OCI-LY7 (cell line): ENCODE measurements at regions of chr5 and their contacts with region 1.

Region 1: DNA sequence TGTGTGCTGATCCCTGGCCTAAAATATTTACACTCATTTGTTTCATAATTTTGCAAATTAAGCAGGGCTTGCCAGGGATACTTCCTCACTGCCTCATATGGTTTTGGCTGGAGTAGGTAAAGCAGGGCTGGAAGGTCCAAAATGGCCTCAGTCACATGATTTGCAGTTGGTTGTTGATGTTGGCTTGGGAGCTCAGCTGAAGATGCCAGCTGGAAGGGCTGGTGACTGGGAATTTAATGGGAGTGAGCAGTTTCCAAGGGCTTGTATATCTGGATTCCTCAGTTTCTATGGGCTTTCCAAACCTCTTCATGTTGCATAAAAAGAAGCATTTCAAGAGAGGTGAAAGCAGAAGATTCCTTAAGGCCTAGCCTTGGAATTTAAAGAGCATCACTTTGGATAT is 729.3 kb downstream of the CDH18 start:
- DNase-seq: no peak
- H3K4me3 ChIP-seq: no peak overlapping the region
- H3K27ac ChIP-seq: no peak overlapping the region
- H3K4me1 ChIP-seq: peaks cover 45% of the 10 kb centered on the region
- CTCF ChIP-seq: no peak

Region 2: DNA sequence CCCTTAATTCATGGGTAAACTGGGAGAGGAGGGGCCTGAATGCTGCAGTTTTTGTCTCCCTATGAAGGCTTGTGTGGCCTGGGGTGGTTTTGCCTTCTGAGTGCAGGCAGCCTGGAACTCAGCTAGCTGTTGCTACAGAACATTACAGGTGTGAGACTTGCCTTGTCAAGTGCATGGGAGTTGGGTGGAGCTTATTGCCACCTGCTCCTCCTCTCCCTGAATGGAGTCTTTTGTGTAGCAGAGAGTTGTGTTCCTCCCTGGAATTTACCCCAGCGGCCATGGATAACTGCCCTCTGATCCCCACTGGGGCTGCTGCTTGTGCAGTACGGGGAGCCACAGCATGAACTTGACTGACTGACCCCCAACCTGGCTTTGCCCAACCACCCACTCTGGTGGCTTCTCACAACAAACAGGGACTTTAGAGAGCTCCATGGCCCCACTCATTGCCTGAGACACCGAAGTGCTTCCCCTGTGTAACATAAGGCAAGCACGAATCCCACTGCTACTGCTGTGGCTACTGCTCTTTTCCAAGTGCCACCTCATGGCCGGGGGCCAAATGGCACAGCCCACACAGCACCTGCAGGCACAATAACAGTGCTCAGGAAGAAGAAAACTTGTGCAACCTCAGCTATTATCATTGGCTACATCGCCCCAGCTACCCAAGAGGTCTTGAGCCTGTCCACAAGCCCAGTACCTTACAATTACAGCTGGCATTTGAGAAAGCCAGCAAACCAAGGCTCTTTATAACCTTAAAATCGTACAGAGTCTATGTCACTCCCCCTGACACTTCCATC is 213.6 kb before region 1 on chr5:
- CTCF ChIA-PET with region 1: no interaction called
- POLR2A ChIA-PET with region 1: no interaction called
- intact Hi-C with region 1: loop called (anchors 10 kb)
- DNase-seq: no peak
- H3K4me3 ChIP-seq: no peak overlapping the region
- H3K27ac ChIP-seq: no peak overlapping the region
- H3K4me1 ChIP-seq: no peaks in the 10 kb centered on the region
- CTCF ChIP-seq: no peak

Region 3: DNA sequence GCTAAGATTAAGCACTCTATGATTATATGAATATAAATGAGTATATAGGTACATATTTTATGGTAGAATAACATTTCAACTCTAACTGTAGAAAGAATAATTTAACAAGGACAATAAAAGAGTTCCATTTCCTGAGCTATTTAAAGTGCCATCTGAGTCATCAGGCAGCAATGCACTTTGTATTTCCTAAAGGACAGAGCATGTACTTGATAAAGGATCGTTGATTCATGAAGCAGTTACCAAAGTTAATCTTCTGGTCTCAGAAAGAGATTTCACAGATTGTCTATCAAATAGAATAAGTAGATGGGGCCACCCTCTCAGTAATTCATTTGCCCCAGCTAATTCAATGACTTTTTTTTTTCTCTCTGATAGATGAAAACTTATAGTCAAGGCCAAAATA is 18.5 kb before region 1 on chr5:
- CTCF ChIA-PET with region 1: no interaction called
- POLR2A ChIA-PET with region 1: interaction called, 103 read pairs
- intact Hi-C with region 1: no loop called
- DNase-seq: no peak
- H3K4me3 ChIP-seq: no peak overlapping the region
- H3K27ac ChIP-seq: no peak overlapping the region
- H3K4me1 ChIP-seq: peaks cover 17% of the 10 kb centered on the region
- CTCF ChIP-seq: no peak

Region 4: DNA sequence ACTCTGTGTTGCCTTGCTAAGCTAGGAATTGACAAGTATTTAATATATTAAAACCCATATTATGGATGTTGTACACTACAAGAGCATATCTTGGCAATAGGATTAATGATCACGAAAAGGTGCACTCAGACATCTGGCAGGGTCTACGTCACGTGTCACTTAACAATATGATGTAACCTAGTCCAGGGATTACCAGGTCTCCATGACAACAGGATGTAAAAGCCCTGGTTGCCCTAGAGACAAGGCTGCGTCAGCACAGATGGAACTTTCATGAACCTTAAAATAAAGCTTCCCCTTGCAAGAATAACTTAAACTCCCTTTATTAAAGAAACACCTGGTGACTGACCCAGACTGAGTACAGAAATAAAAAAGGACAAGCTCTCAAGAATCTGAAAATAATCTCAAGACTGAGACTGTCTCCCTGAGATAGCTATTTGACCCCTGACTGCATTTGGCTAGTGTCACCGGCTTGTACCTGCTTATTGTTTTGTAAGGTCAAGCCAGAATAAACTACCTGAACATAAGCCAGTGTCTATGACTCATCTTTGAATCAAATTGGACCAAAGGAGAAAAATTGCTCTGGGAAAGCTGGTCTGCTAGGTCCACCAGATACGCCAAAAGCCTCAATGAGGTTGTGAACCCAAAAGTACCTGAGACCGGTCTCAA is 11.6 kb after region 1 on chr5:
- CTCF ChIA-PET with region 1: interaction called, 3 read pairs
- POLR2A ChIA-PET with region 1: interaction called, 53 read pairs
- intact Hi-C with region 1: no loop called
- DNase-seq: peak; percentile 99
- H3K4me3 ChIP-seq: peak overlapping the region; percentile 34
- H3K27ac ChIP-seq: peak overlapping the region; percentile 100
- H3K4me1 ChIP-seq: peaks cover 81% of the 10 kb centered on the region
- CTCF ChIP-seq: no peak

Region 5: DNA sequence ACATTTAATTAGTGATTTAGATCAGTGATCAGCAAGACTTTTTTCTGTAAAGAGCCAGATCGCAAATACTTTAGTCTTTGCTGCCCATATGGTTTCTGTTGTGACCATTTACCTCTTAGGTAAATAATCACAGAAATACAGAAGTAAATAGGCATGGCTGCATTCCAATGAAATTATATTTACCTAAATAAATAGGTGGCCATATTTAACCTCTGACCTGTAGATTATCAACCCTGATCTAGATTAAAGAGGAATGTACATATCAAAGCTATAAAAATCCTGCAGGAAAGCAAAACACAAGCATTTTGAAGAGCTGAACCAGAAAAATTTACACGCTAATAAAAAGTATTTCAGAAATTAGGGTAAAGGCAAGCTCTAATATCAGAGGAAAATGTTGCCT is 19.6 kb after region 1 on chr5:
- CTCF ChIA-PET with region 1: no interaction called
- POLR2A ChIA-PET with region 1: interaction called, 45 read pairs
- intact Hi-C with region 1: no loop called
- DNase-seq: no peak
- H3K4me3 ChIP-seq: no peak overlapping the region
- H3K27ac ChIP-seq: no peak overlapping the region
- H3K4me1 ChIP-seq: peaks cover under 1% of the 10 kb centered on the region
- CTCF ChIP-seq: no peak

Region 6: DNA sequence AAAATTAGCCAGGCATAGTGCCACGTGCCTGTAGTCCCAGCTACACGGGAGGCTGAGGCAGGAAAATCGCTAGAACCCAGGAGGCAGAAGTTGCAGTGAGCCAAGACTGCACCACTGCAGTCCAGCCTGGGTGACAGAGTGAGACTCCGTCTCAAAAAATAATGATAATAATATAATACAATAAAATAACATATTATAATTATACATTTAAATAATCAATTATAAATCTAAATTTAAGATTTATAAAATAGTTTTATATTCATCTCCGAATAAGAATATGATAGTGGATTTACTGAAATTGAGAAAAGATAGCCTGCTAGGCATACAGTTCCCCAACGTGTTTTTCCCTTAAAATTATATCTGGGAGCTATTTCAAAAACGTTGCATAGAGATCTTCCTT is 129.7 kb after region 1 on chr5:
- CTCF ChIA-PET with region 1: no interaction called
- POLR2A ChIA-PET with region 1: no interaction called
- intact Hi-C with region 1: no loop called
- DNase-seq: no peak
- H3K4me3 ChIP-seq: no peak overlapping the region
- H3K27ac ChIP-seq: no peak overlapping the region
- H3K4me1 ChIP-seq: no peaks in the 10 kb centered on the region
- CTCF ChIP-seq: no peak